ENCODE measurements at regions of chr20 and their contacts with region 1.

Region 1: DNA sequence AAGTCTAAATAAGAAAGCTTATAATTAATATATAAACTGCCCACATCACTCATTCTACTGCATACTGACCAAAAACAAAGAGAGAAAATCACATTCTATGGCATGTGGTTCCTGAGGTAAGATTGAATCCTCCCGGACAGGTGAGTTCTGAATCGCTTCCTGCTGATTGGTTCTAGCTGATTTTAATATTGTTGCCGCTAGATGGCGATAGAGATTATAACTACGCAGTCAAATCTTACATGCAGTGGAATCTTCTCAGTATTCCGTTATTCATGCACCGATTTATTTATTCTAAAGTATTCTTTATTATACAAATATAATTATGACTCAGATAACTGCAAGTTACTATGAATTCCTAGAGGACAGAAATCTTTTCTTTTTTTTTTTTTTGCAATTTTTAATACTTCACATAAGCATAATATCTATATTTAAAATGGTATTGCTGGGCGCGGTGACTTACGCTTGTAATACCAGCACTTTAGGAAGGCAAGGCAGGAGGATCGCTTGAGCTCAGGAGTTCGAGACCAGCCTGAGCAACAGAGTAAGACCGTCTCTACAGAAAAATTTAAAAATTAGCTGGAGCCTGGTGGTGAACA is 24.2 kb upstream of the TMX4 start:
- DNase-seq: peak; percentile 70 to 71
- ATAC-seq: peak; percentile 65 to 94; a peak in 3 of 6 replicates
- H3K4me3 ChIP-seq: no peak overlapping the region
- H3K27ac ChIP-seq: no peak overlapping the region
- H3K4me1 ChIP-seq: peaks cover 5% of the 10 kb centered on the region; the same call in 1 of the 3 replicates
- CTCF ChIP-seq: peak; percentile 91
- EP300 ChIP-seq: no peak
- POLR2A ChIP-seq: no peak
- RAD21 ChIP-seq: peak; percentile 75 to 76

Region 2: DNA sequence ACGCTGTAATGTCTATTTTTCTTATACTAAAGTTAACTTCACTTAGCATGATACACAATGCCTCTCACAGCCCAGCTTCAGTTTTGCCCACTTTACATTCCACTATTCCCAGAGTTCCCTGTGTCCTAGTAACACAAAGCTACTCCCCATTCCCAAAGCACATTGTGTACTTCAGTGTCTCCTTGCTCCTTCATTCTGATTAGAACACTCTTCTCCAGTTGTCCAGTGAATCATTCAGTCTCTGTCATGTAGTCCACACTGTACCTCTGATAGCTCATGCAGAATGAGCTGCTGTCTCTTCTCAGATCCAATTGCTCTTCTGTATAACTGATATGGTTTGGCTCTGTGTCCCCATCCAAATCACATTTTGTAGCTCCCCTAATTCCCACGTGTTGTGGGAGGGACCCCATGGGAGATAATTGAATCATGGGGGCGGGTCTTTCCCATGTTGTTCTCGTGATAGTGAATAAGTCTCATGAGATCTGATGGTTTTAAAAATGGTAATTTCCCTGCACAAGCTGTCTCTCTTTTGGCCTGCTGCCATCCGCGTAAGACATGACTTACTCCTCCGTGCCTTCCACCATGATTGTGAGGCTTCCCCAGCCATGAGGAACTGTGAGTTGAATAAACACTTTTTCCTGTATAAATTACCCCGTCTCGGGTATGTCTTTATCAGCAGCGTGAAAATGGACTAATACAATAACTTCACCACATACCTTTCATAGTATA is 22.1 kb before region 1 on chr20:
- CTCF ChIA-PET with region 1: interaction called, 13 read pairs
- POLR2A ChIA-PET with region 1: no interaction called
- DNase-seq: no peak
- ATAC-seq: no peak
- H3K4me3 ChIP-seq: no peak overlapping the region
- H3K27ac ChIP-seq: no peak overlapping the region
- H3K4me1 ChIP-seq: peaks cover 9% of the 10 kb centered on the region
- CTCF ChIP-seq: no peak
- EP300 ChIP-seq: no peak
- POLR2A ChIP-seq: no peak
- RAD21 ChIP-seq: no peak

Region 3: GRCh38 chr20:8033151-8033841 is 10.5 kb before region 1 on chr20:
- CTCF ChIA-PET with region 1: interaction called, 22 read pairs
- POLR2A ChIA-PET with region 1: no interaction called
- DNase-seq: no peak
- ATAC-seq: no peak
- H3K4me3 ChIP-seq: no peak overlapping the region
- H3K27ac ChIP-seq: no peak overlapping the region
- H3K4me1 ChIP-seq: no peaks in the 10 kb centered on the region
- CTCF ChIP-seq: no peak
- EP300 ChIP-seq: no peak
- POLR2A ChIP-seq: no peak
- RAD21 ChIP-seq: no peak

Measured in A549 (cell line).